HEK293T (cell line): ENCODE measurements at regions of chr2 and their contacts with region 1.

Region 1: DNA sequence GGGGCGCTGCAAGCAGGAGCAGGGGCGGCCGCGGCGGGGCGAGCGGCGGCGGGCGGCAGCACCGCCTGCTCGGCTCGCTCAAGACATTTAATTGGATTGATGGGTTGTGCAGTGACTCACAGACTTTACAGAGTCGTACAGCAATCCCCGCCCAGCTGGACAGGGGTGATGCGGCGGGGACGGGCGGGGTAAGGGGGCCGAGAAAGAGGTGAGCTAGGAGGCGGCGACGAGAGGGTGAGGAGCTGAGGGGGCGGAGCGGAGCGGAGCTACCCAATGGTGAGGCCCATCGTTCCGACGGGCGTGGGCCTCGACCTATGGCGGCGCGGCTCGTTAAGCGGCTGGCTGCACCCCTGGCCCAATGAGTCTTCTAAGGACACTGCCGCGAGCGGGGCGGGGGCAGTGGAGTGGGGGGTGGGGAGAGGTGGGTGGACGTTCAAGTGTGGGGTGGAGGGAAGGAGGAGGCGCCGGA is 97.1 kb upstream of the SERTAD2 start:
- DNase-seq: peak; percentile 93

Region 2: GRCh38 chr2:64730551-64731262 is 20.1 kb before region 1 on chr2:
- CTCF ChIA-PET with region 1: no interaction called
- POLR2A ChIA-PET with region 1: interaction called, 32 read pairs
- DNase-seq: peak; percentile 43

Region 3: DNA sequence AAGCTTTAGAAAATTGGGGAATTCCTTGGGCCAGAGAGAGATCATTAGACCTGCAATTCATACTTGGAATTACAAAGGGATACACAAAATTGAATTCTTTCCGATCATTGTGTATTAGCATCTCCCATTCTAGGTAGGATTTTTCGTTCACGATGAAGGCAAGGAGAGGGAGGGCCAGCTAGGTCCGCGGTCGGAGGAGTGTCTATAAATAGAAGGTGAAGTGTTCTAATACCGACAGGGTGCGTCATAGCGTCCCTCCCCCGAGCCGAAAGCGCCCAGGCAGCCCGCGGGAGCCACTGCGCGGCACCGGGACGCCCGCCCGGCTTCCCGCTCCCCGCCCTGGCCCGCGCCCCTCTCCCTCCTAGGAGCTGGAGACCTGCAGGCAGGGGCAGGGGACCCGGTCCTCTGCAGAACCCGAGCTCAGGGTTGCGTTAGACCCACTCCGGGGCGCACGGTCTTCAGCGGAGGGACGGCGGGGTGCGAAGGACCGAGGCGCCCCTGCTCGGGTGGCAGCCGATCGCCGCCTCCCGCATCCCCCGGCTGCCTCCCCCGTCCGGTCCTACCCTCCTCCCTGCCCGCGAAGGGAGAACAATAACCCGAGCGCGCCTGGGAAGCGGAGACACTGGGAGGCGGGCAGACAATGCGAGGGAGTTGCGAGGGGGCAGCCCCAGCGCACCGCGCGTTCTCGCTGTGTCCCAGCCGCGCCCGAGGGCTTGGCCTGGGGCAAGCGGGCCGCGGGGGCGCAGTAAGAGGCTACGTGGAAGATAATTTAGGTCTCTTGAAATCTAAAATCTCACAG is 17.0 kb after region 1 on chr2:
- CTCF ChIA-PET with region 1: interaction called, 3 read pairs
- POLR2A ChIA-PET with region 1: interaction called, 20 read pairs
- DNase-seq: peak; percentile 77

Region 4: GRCh38 chr2:64865073-64865830 is 114.4 kb after region 1 on chr2:
- CTCF ChIA-PET with region 1: no interaction called
- POLR2A ChIA-PET with region 1: interaction called, 10 read pairs
- DNase-seq: peak; percentile 87